AG04449 (cell line): ENCODE measurements at regions of chr3 and their contacts with region 1.

Region 1: GRCh38 chr3:18389108-18389733 is 35.9 kb downstream of the SATB1 start:
- DNase-seq: no peak
- H3K4me3 ChIP-seq: no peak overlapping the region
- CTCF ChIP-seq: peak; percentile 27

Region 2: GRCh38 chr3:17894434-17895060 is 494.7 kb before region 1 on chr3:
- CTCF ChIA-PET with region 1: interaction called, 26 read pairs
- POLR2A ChIA-PET with region 1: no interaction called
- DNase-seq: no peak
- H3K4me3 ChIP-seq: no peak overlapping the region
- CTCF ChIP-seq: peak; percentile 56

Region 3: DNA sequence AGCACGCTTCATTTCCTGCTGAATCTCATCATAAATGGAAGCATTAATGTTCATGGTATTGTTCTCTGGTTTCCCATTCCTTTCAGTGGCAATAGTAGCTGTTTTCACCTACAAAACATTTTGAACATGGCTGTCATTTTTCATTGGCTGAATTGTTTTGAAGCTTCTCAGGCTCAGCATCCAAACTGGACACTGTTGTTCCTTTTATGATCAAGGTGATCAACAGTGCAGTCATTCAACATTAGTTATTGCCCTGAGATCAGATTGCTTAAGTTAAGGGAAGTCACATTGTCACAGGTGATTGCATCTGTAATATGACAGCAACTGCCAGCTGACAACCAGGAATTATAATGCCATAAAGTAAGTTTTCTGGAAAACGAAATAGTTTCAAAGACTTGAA is 11.0 kb before region 1 on chr3:
- CTCF ChIA-PET with region 1: interaction called, 26 read pairs
- POLR2A ChIA-PET with region 1: no interaction called
- DNase-seq: no peak
- H3K4me3 ChIP-seq: no peak overlapping the region
- CTCF ChIP-seq: no peak

Region 4: DNA sequence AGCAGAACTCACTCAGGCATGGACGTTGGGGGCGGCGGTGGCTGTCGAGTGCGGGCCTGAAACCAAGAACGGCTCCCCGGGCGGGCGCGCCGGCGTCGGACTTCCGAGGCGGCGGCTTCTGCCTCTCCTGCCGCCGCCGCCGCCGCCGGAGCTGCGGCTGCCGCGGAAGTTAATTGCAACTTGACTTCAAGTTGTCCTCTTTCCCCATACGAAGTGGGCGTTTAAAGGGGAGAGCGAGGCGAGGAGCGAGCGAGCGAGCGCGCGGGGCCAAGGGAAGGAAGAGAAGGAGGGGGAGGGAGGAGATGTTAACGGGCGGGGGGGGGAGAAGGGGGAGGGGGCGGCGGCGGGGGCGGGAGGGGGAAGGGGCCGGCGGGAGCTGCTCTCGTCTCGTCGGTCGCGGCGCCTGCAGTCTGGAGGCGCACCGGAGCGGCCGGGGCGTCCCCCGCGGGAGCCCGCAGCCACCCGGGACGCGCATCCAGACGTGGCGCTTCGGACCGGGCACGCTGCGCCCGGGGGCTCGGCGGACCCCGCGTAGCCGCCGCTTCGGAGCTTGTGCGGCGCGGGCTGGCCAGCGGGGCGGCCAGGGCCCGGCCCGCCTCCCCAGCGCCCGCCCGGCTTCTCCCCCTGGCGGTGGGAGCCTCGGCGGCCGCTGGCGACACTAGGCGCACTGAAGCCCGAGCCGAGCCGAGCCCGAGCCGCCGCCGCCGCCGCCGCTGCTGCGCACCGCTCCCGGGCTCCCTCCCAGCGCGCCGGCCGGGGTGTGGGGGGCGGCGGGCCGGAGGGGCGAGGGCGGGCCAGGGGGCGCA is 55.6 kb after region 1 on chr3:
- CTCF ChIA-PET with region 1: no interaction called
- POLR2A ChIA-PET with region 1: no interaction called
- DNase-seq: no peak
- H3K4me3 ChIP-seq: peak overlapping the region; percentile 59
- CTCF ChIP-seq: peak; percentile 53

Region 5: DNA sequence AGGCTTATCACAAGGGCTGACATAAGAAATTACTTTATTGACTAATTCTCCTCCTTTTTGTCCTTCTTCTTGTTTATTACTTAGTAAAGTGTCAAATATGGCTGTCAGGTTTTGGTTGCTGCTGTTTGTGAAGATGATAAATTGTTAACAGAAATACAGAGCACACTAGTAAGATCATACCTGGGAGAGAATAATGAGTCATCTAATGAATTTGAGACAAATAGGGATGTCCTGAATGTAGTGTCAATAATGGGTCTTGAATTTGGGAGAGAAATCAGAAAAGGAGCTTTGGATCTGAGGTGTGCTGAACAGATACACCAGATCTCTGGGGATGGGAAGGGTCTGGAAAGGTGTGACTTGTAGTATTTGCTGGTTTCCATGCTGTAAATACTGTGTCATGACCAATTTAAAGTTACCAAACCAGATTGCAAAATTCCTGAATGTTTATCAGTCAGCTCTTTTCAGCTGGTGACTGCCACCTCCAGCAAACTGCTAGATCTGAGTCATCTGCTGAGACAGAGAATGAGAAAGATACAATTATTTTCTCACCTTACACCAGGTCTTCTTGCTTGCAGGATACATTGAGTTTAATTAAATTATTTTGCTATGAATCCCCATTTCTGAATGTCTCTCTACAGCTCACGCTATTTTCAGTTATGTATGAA is 112.6 kb after region 1 on chr3:
- CTCF ChIA-PET with region 1: no interaction called
- POLR2A ChIA-PET with region 1: no interaction called
- DNase-seq: no peak
- H3K4me3 ChIP-seq: no peak overlapping the region
- CTCF ChIP-seq: no peak

Region 6: GRCh38 chr3:19114461-19114860 is 725.2 kb after region 1 on chr3:
- CTCF ChIA-PET with region 1: no interaction called
- POLR2A ChIA-PET with region 1: no interaction called
- DNase-seq: no peak
- H3K4me3 ChIP-seq: no peak overlapping the region
- CTCF ChIP-seq: no peak